Cardiac septum (tissue), 1 donor: ENCODE measurements at regions of chr3 and their contacts with region 1.

Region 1: GRCh38 chr3:46423588-46423987 is 16.5 kb downstream of the CCRL2 start:
- DNase-seq: no peak

Region 2: DNA sequence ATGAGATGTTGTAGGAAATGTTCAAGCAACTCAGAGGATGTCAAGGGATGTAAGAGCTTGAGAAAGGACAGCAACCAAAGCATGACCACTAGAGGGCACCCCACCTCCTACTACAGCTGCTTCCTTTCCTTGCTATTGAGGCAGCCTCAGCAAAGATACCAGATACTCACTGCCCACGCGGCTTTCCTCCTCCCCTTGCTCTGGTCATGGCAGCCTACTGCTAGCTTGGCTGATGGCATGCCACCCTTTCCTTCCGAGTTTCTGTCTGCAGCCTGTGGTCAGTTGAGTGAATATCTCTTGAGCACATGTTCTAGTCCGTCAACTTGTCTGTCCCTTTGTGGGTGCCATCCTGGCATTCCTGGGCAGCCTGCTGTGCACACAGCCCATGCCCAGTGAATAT is 484.7 kb before region 1 on chr3:
- intact Hi-C with region 1: loop called (anchors 5 kb)
- DNase-seq: peak; percentile 84

Region 3: GRCh38 chr3:46089237-46090011 is 334.2 kb before region 1 on chr3:
- intact Hi-C with region 1: loop called (anchors 10 kb)
- DNase-seq: peak; percentile 90

Region 4: GRCh38 chr3:46100812-46101211 is 322.8 kb before region 1 on chr3:
- intact Hi-C with region 1: no loop called
- DNase-seq: peak; percentile 75

Region 5: GRCh38 chr3:46276502-46277099 is 147.0 kb before region 1 on chr3:
- intact Hi-C with region 1: loop called (anchors 2 kb)
- DNase-seq: no peak